ENCODE measurements at regions of chr1 and their contacts with region 1.

Region 1: GRCh38 chr1:146049436-146049835 is 27.9 kb upstream of the HJV start:
- DNase-seq: no peak
- H3K4me3 ChIP-seq: no peak overlapping the region
- H3K27ac ChIP-seq: no peak overlapping the region
- H3K4me1 ChIP-seq: no peaks in the 10 kb centered on the region
- H3K27me3 ChIP-seq: no peaks in the 10 kb centered on the region
- CTCF ChIP-seq: no peak

Region 2: DNA sequence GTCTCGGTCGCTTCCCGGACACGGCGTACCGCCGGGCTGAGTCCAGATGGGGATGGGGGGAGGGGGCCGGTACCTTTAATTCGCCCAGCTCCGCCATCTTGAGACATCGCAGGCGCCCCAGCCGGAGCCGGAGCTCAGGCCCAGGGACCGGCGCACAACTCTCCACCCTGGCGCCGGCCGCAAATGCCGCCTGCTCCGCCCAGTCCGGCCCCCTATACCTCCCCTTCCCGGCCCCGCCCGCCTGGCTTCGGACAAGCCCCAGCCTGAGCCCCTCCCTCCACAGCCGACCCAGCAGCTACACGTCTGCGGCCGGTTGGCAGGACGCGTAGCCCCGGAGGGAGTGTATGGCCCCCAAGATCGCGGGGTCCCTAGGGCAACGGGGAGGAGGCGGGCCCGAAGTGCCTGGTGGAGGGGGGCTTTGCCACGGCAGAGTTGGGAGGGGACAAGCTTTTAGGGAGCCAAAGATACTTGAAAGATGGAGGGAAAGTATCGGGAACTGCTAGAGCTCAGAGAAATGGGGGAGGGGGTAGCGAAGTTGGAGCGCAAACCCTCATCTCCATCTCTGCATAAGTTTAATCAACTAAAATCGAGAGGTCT is 190.4 kb before region 1 on chr1 and contains the start of gene PIAS3:
- intact Hi-C with region 1: no loop called
- DNase-seq: peak; percentile 83 to 98
- H3K4me3 ChIP-seq: peak within 1 kb of the TSS; percentile 85 to 92
- H3K27ac ChIP-seq: peak within 1 kb of the TSS; percentile 92 to 93
- H3K4me1 ChIP-seq: peaks cover 6 to 13% of the 10 kb centered on the region in 2 donors
- H3K27me3 ChIP-seq: no peaks in the 10 kb centered on the region
- CTCF ChIP-seq: no peak
- total RNA-seq, gene PIAS3: 44.4 TPM

Region 3: GRCh38 chr1:146035048-146035423 is 14.4 kb before region 1 on chr1:
- intact Hi-C with region 1: loop called (anchors 2 kb)
- DNase-seq: no peak
- H3K4me3 ChIP-seq: peak overlapping the region in 1 of 2 donors; percentile 76
- H3K27ac ChIP-seq: peak overlapping the region; percentile 37 to 62
- H3K4me1 ChIP-seq: peaks cover 4 to 8% of the 10 kb centered on the region in 2 donors
- H3K27me3 ChIP-seq: no peaks in the 10 kb centered on the region
- CTCF ChIP-seq: no peak